HEK293 (cell line): ENCODE measurements at regions of chr3 and their contacts with region 1.

Region 1: DNA sequence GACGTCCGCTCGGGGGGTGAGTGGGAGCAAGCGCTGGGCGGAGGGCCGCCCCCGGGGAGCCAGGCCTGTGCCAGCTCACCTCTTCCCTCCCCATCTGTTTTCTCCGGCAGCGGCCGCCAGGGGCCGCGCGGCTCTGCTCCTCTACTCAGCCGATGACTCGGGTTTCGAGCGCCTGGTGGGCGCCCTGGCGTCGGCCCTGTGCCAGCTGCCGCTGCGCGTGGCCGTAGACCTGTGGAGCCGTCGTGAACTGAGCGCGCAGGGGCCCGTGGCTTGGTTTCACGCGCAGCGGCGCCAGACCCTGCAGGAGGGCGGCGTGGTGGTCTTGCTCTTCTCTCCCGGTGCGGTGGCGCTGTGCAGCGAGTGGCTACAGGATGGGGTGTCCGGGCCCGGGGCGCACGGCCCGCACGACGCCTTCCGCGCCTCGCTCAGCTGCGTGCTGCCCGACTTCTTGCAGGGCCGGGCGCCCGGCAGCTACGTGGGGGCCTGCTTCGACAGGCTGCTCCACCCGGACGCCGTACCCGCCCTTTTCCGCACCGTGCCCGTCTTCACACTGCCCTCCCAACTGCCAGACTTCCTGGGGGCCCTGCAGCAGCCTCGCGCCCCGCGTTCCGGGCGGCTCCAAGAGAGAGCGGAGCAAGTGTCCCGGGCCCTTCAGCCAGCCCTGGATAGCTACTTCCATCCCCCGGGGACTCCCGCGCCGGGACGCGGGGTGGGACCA is 632 bp upstream of the CRELD1 start:
- H3K4me3 ChIP-seq: peak overlapping the region; percentile 31
- H3K27ac ChIP-seq: peak overlapping the region; percentile 95
- H3K4me1 ChIP-seq: 0 out of 2 replicates have a peak, but pooled peaks cover 2% of the 10 kb centered on the region
- CTCF ChIP-seq: peak; percentile 97

Region 2: DNA sequence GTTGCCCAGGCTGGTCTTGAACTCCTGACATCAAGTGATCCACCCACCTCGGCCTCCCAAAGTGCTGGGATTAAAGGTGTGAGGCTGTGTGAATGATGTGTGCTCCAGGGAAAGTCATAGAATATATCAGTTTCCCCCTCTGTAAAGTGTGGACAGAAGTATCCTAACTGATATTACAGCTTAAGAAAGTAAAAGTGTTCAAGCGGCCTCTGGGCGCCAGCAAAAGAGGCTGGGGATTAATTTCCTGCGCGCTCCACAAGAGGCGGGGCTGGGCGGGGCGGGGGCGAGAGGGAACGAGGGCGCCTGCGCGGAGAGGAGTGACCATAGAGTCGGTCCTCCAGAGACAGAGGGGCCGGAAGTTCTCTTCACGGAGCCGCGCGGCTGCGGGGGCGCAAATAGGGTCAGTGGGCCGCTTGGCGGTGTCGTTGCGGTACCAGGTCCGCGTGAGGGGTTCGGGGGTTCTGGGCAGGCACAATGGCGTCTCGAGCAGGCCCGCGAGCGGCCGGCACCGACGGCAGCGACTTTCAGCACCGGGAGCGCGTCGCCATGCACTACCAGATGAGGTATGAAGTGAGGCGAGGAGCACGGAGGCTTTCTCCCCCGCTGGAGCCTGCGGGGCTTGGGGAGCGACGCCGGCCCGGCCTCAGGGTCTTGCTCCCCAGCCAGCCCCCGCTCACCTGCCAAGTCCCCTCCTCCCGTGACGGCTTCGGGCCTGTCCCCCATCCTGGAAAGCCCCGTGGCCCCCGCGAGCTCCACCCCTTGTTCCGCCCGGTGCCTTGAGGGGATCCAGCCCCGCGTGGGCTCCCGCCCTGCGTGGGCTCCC is 42.5 kb before region 1 on chr3 and contains the start of gene JAGN1:
- CTCF ChIA-PET with region 1: interaction called, 7 read pairs
- POLR2A ChIA-PET with region 1: interaction called, 24 read pairs
- H3K4me3 ChIP-seq: peak within 1 kb of the TSS; percentile 73
- H3K27ac ChIP-seq: peak within 1 kb of the TSS; percentile 53; the same call in 1 of the 2 replicates
- H3K4me1 ChIP-seq: no peaks in the 10 kb centered on the region
- CTCF ChIP-seq: peak; percentile 82

Region 3: GRCh38 chr3:9915254-9916141 is 17.5 kb before region 1 on chr3:
- CTCF ChIA-PET with region 1: interaction called, 7 read pairs
- POLR2A ChIA-PET with region 1: interaction called, 23 read pairs
- H3K4me3 ChIP-seq: peak overlapping the region; percentile 4
- H3K27ac ChIP-seq: peak overlapping the region; percentile 54; the same call in 1 of the 2 replicates
- H3K4me1 ChIP-seq: peaks cover 19% of the 10 kb centered on the region
- CTCF ChIP-seq: no peak

Region 4: GRCh38 chr3:9951962-9952805 is 19.2 kb after region 1 on chr3 and contains the start of gene PRRT3:
- CTCF ChIA-PET with region 1: interaction called, 17 read pairs
- POLR2A ChIA-PET with region 1: interaction called, 33 read pairs
- H3K4me3 ChIP-seq: peak within 1 kb of the TSS; percentile 47
- H3K27ac ChIP-seq: no peak within 1 kb of the TSS
- H3K4me1 ChIP-seq: peaks cover 14% of the 10 kb centered on the region
- CTCF ChIP-seq: no peak; the same call in 1 of the 2 replicates

Region 5: GRCh38 chr3:9986237-9986725 is 53.3 kb after region 1 on chr3:
- CTCF ChIA-PET with region 1: interaction called, 5 read pairs
- POLR2A ChIA-PET with region 1: interaction called, 10 read pairs
- H3K4me3 ChIP-seq: peak overlapping the region; percentile 61
- H3K27ac ChIP-seq: peak overlapping the region; percentile 78; the same call in 1 of the 2 replicates
- H3K4me1 ChIP-seq: peaks cover 4% of the 10 kb centered on the region
- CTCF ChIP-seq: no peak